Esophagus squamous epithelium (tissue), 5 donors: ENCODE measurements at regions of chr17 and their contacts with region 1.

Region 1: DNA sequence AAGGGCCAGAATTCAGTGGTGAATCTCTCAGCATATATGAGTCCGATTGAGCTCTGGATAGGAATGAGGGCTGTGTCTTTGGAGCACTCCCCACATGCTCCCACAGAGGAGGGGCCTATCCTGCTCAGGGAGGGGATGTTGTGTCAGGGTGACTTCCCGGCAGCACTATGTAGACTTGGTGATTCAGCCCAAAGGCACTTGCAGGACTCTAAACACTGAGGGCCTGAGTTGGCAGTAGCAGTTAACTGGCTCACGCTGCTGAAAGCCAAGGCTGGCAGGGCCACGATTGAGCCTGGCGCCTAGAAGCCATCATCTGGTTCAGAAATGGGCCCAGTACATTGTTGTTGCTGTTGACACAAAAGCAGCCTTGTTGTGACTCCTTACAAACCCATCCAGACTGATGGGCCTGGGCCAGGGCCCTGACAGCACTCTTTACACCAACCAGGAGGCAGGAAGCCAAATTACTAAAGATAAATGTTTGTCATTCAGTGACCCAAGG is 31.9 kb downstream of the NMT1 start:
- DNase-seq: no peak
- H3K4me3 ChIP-seq: peak overlapping the region in 1 of 4 donors; percentile 16
- H3K27ac ChIP-seq: peak overlapping the region; percentile 77 to 92 (median 90)
- H3K4me1 ChIP-seq: peaks cover 30 to 69% (median 42%) of the 10 kb centered on the region in 3 donors
- H3K27me3 ChIP-seq: no peaks in the 10 kb centered on the region
- CTCF ChIP-seq: no peak
- POLR2A ChIP-seq: peak in 1 of 4 donors; percentile 19

Region 2: GRCh38 chr17:45051060-45051719 is 41.8 kb before region 1 on chr17 and contains the start of gene DCAKD:
- intact Hi-C with region 1: loop called (anchors 5 kb)
- DNase-seq: peak; percentile 61
- H3K4me3 ChIP-seq: peak within 1 kb of the TSS; percentile 48 to 86 (median 57)
- H3K27ac ChIP-seq: peak within 1 kb of the TSS; percentile 94 to 99 (median 97)
- H3K4me1 ChIP-seq: peaks cover 23 to 62% (median 41%) of the 10 kb centered on the region in 3 donors
- H3K27me3 ChIP-seq: no peaks in the 10 kb centered on the region
- CTCF ChIP-seq: peak in 3 of 6 experiments; percentile 35 to 45 (median 35)
- POLR2A ChIP-seq: peak in 3 of 4 donors; percentile 52 to 93 (median 90)
- total RNA-seq, gene DCAKD: 23.8 to 44.1 (median 34.7) TPM